ENCODE measurements at regions of chr11 and their contacts with region 1.

Region 1: GRCh38 chr11:102346748-102347461 is at the start of gene BIRC2:
- DNase-seq: peak; percentile 85 to 96 (median 88)
- ATAC-seq: peak; percentile 93
- H3K4me3 ChIP-seq: peak within 1 kb of the TSS; percentile 60
- H3K27ac ChIP-seq: peak within 1 kb of the TSS; percentile 86
- H3K4me1 ChIP-seq: peaks cover 0 to 12% of the 10 kb centered on the region in 2 experiments; a peak in 3 of 5 replicates
- H3K27me3 ChIP-seq: no peaks in the 10 kb centered on the region
- CTCF ChIP-seq: peak; percentile 80 to 90 (median 86)
- EP300 ChIP-seq: peak; percentile 41; the same call in 1 of the 2 replicates
- POLR2A ChIP-seq: peak; percentile 91
- RAD21 ChIP-seq: peak; percentile 23 to 44; a peak in 3 of 4 replicates
- polyA plus RNA-seq, gene BIRC2: 14.3 to 20.7 TPM

Region 2: GRCh38 chr11:102097186-102097585 is 249.7 kb before region 1 on chr11:
- CTCF ChIA-PET with region 1: no interaction called
- POLR2A ChIA-PET with region 1: no interaction called
- in situ Hi-C with region 1: no loop called
- intact Hi-C with region 1: no loop called
- DNase-seq: no peak
- ATAC-seq: no peak
- H3K4me3 ChIP-seq: no peak overlapping the region
- H3K27ac ChIP-seq: no peak overlapping the region
- H3K4me1 ChIP-seq: no peaks in the 10 kb centered on the region
- H3K27me3 ChIP-seq: peaks cover 0 to 3% of the 10 kb centered on the region in 2 experiments; a peak in 1 of 5 replicates
- CTCF ChIP-seq: no peak
- EP300 ChIP-seq: no peak
- POLR2A ChIP-seq: no peak
- RAD21 ChIP-seq: no peak

Region 3: GRCh38 chr11:102384419-102385079 is 37.6 kb after region 1 on chr11:
- CTCF ChIA-PET with region 1: no interaction called
- POLR2A ChIA-PET with region 1: interaction called, 4 read pairs
- in situ Hi-C with region 1: no loop called
- intact Hi-C with region 1: loop called (anchors 2 kb)
- DNase-seq: peak; percentile 53 to 82 (median 70)
- ATAC-seq: peak; percentile 83
- H3K4me3 ChIP-seq: no peak overlapping the region
- H3K27ac ChIP-seq: peak overlapping the region; percentile 76
- H3K4me1 ChIP-seq: peaks cover 12 to 39% of the 10 kb centered on the region in 2 experiments; a peak in 4 of 5 replicates
- H3K27me3 ChIP-seq: no peaks in the 10 kb centered on the region
- CTCF ChIP-seq: no peak
- EP300 ChIP-seq: no peak
- POLR2A ChIP-seq: no peak
- RAD21 ChIP-seq: no peak

Region 4: DNA sequence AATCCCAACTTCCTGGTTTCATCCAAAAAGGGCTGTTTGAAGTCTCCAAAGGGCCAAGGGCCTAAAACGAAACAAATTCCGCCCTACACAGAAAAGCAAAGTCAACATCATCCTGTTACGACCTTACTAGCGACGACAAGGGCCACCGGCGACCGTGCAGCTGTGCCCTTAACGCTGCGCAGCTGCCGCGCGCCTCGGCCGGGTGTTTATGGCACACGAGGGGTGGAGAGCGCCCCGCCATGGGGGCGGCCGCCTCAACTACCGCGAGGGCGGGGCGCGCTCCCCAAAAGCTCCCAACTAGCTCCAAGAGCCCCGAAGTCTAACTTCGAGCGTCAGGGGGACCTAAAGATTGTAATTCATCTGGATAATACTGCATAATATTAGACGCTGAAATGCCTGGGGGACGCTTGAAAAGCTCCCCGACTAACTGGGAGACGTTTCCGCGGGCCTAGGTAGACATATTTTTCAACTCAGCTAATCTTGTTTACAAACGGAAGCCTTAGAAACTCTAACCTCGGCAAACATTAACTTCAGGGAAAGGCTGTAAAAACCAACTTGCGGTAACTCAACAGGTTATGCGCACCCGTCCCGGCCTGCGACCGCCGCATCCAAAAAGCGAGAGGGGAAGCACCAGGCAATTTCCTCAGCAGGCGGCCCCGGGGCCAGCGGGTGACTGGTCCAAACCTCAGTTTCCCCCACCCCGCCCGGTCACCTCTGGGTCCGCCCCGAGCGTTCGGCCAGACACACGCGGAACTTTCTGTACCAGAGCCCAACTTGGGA is 105.0 kb after region 1 on chr11:
- CTCF ChIA-PET with region 1: no interaction called
- POLR2A ChIA-PET with region 1: no interaction called
- in situ Hi-C with region 1: no loop called
- intact Hi-C with region 1: loop called (anchors 2 kb)
- DNase-seq: peak; percentile 66 to 81 (median 70)
- ATAC-seq: peak; percentile 84
- H3K4me3 ChIP-seq: peak overlapping the region; percentile 88
- H3K27ac ChIP-seq: peak overlapping the region; percentile 86
- H3K4me1 ChIP-seq: peaks cover 10 to 32% of the 10 kb centered on the region in 2 experiments; a peak in 4 of 5 replicates
- H3K27me3 ChIP-seq: no peaks in the 10 kb centered on the region
- CTCF ChIP-seq: peak; percentile 3 to 42 (median 20); a peak in 4 of 6 replicates
- EP300 ChIP-seq: no peak
- POLR2A ChIP-seq: no peak; the same call in 1 of the 2 replicates
- RAD21 ChIP-seq: peak in 1 of 2 experiments; percentile 22; a peak in 2 of 4 replicates